Dendritic cell treated with granulocyte-macrophage colony-stimulating factor and Interleukin-4, amounts not matched to agents 40 ng/mL and 50 ng/mL, for 4 days (primary cell): ENCODE measurements at regions of chr1 and their contacts with region 1.

Region 1: DNA sequence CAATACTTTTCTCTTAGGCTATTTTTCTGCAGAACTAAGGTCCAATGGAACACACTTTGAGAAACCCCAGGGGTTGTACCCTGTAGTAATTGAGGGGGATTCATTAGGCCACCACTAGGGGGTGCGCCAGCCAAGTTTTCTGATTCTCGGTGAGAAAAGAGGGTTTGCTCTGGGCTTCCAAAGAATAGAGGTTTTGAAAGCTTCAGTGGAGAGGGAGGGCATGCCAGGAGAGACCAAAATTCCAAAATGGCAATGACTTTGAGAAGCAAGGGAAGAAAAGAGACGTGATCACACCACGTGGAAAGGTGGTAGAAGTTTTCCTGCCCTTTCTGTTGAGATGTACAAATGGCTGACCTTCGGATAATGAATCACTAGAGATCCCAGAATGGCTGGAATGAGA is 323.3 kb downstream of the RPS6KC1 start:
- H3K4me3 Mint-ChIP-seq: no peak overlapping the region
- H3K27ac Mint-ChIP-seq: no peak overlapping the region
- H3K4me1 Mint-ChIP-seq: peaks cover 5% of the 10 kb centered on the region
- H3K27me3 Mint-ChIP-seq: peaks cover 9% of the 10 kb centered on the region

Region 2: DNA sequence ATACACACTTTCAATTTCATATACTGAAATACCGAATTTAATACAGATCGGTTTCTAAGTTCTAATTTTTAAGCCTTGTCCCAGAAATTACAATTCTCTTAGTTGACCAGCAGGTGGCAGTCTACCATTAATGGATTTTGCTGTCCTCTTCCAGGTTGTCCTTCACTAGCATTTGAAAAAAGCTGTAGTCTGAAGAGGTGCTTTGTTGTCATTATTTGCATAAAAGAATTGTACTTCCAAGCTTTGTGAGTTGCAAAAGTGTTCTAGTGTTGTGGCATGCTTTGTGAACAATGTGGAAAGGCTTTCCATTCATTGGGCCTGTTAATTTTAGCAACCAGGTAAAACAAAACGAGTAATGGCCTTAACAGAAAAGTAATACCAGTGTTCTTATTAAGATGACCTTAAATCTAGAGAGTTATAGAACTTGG is 129.7 kb before region 1 on chr1:
- intact Hi-C with region 1: loop called (anchors 10 kb)
- H3K4me3 Mint-ChIP-seq: no peak overlapping the region
- H3K27ac Mint-ChIP-seq: no peak overlapping the region
- H3K4me1 Mint-ChIP-seq: peaks cover 5% of the 10 kb centered on the region
- H3K27me3 Mint-ChIP-seq: no peaks in the 10 kb centered on the region